HEK293 (cell line): ENCODE measurements at regions of chr12 and their contacts with region 1.

Region 1: GRCh38 chr12:92378682-92379479 is 233.2 kb upstream of the BTG1 start:
- H3K4me3 ChIP-seq: no peak overlapping the region
- H3K27ac ChIP-seq: no peak overlapping the region
- H3K4me1 ChIP-seq: no peaks in the 10 kb centered on the region
- CTCF ChIP-seq: no peak

Region 2: DNA sequence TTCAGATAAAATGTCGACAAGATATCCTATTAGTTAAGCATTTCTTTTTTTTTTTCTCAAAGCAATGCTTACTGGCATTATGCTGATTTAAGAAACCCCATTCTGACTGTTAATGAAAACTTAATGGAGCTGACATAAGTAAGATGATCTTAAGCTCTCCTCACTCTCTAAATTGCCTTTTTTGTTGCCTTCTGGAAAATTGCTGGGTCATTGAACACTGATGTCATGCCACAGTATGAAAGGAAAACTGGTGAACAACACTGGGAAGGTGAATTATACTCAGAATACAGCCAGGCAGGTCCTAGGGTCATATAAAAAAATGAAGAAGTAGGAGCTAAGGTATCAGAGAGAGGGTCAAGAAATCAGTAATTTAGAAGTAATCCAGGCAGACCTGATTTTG is 413.1 kb before region 1 on chr12:
- CTCF ChIA-PET with region 1: interaction called, 11 read pairs
- POLR2A ChIA-PET with region 1: no interaction called
- H3K4me3 ChIP-seq: no peak overlapping the region
- H3K27ac ChIP-seq: no peak overlapping the region
- H3K4me1 ChIP-seq: no peaks in the 10 kb centered on the region
- CTCF ChIP-seq: no peak

Region 3: DNA sequence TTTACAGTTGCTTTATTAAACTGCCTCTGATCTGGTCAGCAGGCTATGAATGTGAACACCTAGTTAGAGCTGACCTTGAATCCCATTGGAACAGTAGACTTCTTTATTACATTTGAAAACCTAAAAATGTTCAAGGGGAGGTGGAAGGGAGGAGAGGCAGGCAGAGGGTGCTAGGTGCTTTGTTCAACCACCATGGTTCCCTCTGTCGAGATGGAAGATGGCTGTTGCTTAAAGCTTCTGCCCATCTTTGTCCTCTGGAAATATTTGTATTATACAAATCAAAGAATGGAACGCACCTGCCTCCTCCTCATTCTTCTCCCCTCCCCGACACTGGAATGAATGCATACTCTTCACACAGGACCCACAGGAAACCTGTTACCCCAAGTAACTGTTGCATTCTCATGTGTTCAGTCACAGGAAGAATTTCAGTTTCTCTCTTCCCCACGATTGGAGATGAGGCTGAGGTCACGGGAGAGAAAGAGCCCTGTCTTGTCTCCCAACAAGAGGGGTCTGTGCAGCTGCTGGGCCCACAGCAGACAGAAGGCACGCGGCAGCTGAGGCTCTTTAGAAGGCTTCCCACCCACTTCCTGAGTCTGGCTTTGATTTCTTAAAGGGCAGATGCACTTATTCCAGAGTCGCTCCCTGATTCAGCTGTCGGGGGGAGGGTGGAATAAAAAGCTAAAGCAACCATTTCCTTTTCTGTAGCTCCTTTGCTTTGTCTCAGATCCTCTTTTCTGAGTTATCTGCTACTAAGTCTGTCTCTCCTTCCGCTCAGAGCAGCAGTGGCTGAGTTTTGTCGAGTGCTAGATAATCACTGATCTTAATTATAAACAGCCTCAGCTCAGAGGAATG is 15.4 kb before region 1 on chr12:
- CTCF ChIA-PET with region 1: no interaction called
- POLR2A ChIA-PET with region 1: no interaction called
- H3K4me3 ChIP-seq: no peak overlapping the region
- H3K27ac ChIP-seq: no peak overlapping the region
- H3K4me1 ChIP-seq: no peaks in the 10 kb centered on the region
- CTCF ChIP-seq: no peak

Region 4: DNA sequence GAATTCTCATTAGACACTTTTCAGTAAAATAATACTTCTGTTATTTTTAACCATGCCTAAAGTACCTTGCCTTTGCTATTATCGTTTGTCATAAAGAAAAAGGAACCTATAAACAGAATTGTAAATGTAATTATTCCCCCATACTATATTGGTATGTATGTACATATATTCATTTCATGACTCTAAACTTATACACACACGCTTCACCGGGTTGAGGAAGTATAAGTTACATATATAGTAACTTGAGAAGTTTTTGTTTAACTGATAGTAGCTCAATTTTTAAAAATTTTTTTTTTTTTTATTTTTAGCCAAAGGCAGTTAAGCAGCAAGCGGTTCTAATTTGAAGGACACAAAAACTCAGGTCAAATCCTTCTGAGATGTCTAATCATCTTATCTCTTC is 431.5 kb after region 1 on chr12:
- CTCF ChIA-PET with region 1: no interaction called
- POLR2A ChIA-PET with region 1: no interaction called
- H3K4me3 ChIP-seq: no peak overlapping the region
- H3K27ac ChIP-seq: no peak overlapping the region
- H3K4me1 ChIP-seq: no peaks in the 10 kb centered on the region
- CTCF ChIP-seq: no peak